Ascending aorta (tissue), 2 donors: ENCODE measurements at regions of chr11 and their contacts with region 1.

Region 1: GRCh38 chr11:116787786-116788486 is at the start of gene ZPR1:
- DNase-seq: peak; percentile 46 to 91
- H3K4me3 ChIP-seq: peak within 1 kb of the TSS; percentile 92 to 93
- H3K27ac ChIP-seq: peak within 1 kb of the TSS; percentile 77 to 90
- H3K4me1 ChIP-seq: peaks cover 0 to 14% of the 10 kb centered on the region in 2 donors
- H3K27me3 ChIP-seq: no peaks in the 10 kb centered on the region
- CTCF ChIP-seq: no peak
- total RNA-seq, gene ZPR1: 171 TPM

Region 2: GRCh38 chr11:116703421-116703820 is 84.5 kb before region 1 on chr11:
- intact Hi-C with region 1: no loop called
- DNase-seq: no peak
- H3K4me3 ChIP-seq: no peak overlapping the region
- H3K27ac ChIP-seq: no peak overlapping the region
- H3K4me1 ChIP-seq: no peaks in the 10 kb centered on the region
- H3K27me3 ChIP-seq: no peaks in the 10 kb centered on the region
- CTCF ChIP-seq: no peak

Region 3: GRCh38 chr11:116835791-116836631 is 48.1 kb after region 1 on chr11:
- intact Hi-C with region 1: loop called (anchors 1 kb)
- DNase-seq: peak; percentile 61 to 93
- H3K4me3 ChIP-seq: peak overlapping the region; percentile 38 to 64
- H3K27ac ChIP-seq: peak overlapping the region; percentile 88 to 92
- H3K4me1 ChIP-seq: peaks cover 11 to 12% of the 10 kb centered on the region in 2 donors
- H3K27me3 ChIP-seq: no peaks in the 10 kb centered on the region
- CTCF ChIP-seq: peak; percentile 59 to 66 (median 60)

Region 4: GRCh38 chr11:117107701-117108590 is 320.0 kb after region 1 on chr11:
- intact Hi-C with region 1: loop called (anchors 2 kb)
- DNase-seq: no peak
- H3K4me3 ChIP-seq: no peak overlapping the region
- H3K27ac ChIP-seq: no peak overlapping the region
- H3K4me1 ChIP-seq: no peaks in the 10 kb centered on the region
- H3K27me3 ChIP-seq: no peaks in the 10 kb centered on the region
- CTCF ChIP-seq: no peak

Region 5: GRCh38 chr11:117226388-117227385 is 438.8 kb after region 1 on chr11:
- intact Hi-C with region 1: loop called (anchors 2 kb)
- DNase-seq: peak in 1 of 2 donors; percentile 71
- H3K4me3 ChIP-seq: no peak overlapping the region
- H3K27ac ChIP-seq: peak overlapping the region in 1 of 2 donors; percentile 16
- H3K4me1 ChIP-seq: peaks cover 7 to 19% of the 10 kb centered on the region in 2 donors
- H3K27me3 ChIP-seq: no peaks in the 10 kb centered on the region
- CTCF ChIP-seq: peak; percentile 71 to 87 (median 83)